ENCODE measurements at regions of chr5 and their contacts with region 1.

Region 1: DNA sequence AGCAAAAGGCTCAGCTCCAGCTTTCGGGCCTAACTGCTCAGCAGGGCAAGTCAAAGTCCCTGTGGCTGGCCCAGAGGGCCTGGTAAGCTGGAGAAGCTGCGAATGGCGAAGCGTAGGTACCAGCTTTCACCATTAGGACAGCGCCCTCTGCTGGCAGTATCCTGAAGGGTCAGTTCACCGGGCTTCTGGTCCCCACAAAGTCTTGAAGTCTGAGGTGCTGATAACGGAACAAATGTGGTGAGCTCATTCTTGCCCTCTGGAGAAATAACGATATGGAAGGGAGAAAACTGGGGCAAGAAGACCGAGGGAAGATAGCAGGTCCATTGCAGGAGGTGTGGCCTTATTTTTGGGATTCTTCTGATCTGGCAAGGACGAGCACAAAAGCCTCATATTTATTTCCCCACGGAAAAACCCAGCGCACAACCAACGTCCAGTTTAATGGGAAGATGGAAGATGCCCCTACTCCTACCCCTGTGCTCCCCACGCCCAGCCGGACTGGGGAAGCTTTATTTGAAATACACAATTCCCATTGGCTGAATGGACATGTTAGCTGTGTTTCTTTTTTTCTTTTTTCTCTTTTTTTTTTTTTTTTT is 7.2 kb downstream of the SOWAHA start:
- DNase-seq: peak; percentile 85
- H3K4me3 ChIP-seq: no peak overlapping the region
- H3K27ac ChIP-seq: peak overlapping the region; percentile 39
- H3K27me3 ChIP-seq: no peaks in the 10 kb centered on the region
- CTCF ChIP-seq: peak; percentile 95

Region 2: GRCh38 chr5:132526290-132526973 is 293.8 kb before region 1 on chr5:
- CTCF ChIA-PET with region 1: interaction called, 17 read pairs
- POLR2A ChIA-PET with region 1: no interaction called
- DNase-seq: no peak
- H3K4me3 ChIP-seq: peak overlapping the region; percentile 20; the same call in 1 of the 2 replicates
- H3K27ac ChIP-seq: no peak overlapping the region
- H3K27me3 ChIP-seq: peaks cover 10% of the 10 kb centered on the region
- CTCF ChIP-seq: peak; percentile 85

Region 3: GRCh38 chr5:132704875-132705274 is 115.4 kb before region 1 on chr5:
- CTCF ChIA-PET with region 1: interaction called, 11 read pairs
- POLR2A ChIA-PET with region 1: no interaction called
- DNase-seq: no peak
- H3K4me3 ChIP-seq: no peak overlapping the region
- H3K27ac ChIP-seq: no peak overlapping the region
- H3K27me3 ChIP-seq: no peaks in the 10 kb centered on the region
- CTCF ChIP-seq: no peak

Region 4: DNA sequence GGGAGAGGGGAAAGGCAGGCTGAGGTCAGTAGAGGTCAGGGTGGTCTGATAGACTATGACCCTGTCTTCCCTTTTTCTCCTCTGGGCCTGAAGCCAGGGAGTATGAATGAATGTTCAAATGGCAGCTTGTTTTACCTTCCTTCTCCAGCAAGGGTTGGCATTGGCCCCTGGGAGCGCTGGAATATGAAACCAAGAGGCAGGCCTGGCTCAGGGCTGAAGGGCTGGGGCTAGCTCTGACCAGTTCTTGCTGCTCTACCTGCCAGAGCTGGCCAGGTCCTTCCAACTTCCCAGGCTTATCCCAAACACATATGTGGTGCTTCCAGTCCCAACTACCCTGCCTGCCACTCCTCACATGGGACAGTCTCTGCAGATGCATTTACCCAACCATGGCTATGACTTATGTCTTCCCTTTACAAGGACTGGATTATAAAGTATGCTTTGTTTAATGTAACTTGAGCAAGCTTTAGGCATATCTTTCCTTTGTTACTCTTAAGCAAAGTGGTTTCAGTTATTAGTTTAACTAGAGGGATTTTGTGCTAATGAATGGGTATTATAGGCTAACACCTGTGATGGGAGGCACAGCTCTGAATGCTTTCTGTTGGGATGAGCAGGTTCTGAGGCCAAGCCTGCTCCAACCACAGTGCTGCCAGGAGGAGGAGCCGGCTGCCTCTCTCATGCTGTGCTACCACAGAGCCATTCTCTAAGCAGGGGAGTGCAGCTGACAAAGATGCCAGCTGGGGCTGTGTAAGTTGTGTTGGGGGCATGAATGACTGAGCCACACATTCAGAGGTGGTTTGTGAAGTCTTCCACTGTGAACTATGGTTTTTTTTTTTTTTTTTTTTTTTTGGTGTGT is 66.9 kb before region 1 on chr5:
- CTCF ChIA-PET with region 1: interaction called, 147 read pairs
- POLR2A ChIA-PET with region 1: interaction called, 7 read pairs
- DNase-seq: no peak
- H3K4me3 ChIP-seq: no peak overlapping the region
- H3K27ac ChIP-seq: no peak overlapping the region
- H3K27me3 ChIP-seq: peaks cover 14% of the 10 kb centered on the region
- CTCF ChIP-seq: 0 out of 2 replicates have a peak, but pooled peaks have one; percentile 6

Region 5: GRCh38 chr5:132807163-132807838 is 13.0 kb before region 1 on chr5:
- CTCF ChIA-PET with region 1: interaction called, 54 read pairs
- POLR2A ChIA-PET with region 1: no interaction called
- DNase-seq: no peak
- H3K4me3 ChIP-seq: no peak overlapping the region
- H3K27ac ChIP-seq: no peak overlapping the region
- H3K27me3 ChIP-seq: peaks cover 28% of the 10 kb centered on the region
- CTCF ChIP-seq: peak; percentile 27

Region 6: GRCh38 chr5:132859889-132860437 is 39.7 kb after region 1 on chr5:
- CTCF ChIA-PET with region 1: interaction called, 13 read pairs
- POLR2A ChIA-PET with region 1: no interaction called
- DNase-seq: no peak
- H3K4me3 ChIP-seq: no peak overlapping the region
- H3K27ac ChIP-seq: no peak overlapping the region
- H3K27me3 ChIP-seq: no peaks in the 10 kb centered on the region
- CTCF ChIP-seq: no peak

Region 7: GRCh38 chr5:133052333-133053175 is 232.3 kb after region 1 on chr5:
- CTCF ChIA-PET with region 1: no interaction called
- POLR2A ChIA-PET with region 1: no interaction called
- DNase-seq: no peak
- H3K4me3 ChIP-seq: peak overlapping the region; percentile 96
- H3K27ac ChIP-seq: peak overlapping the region; percentile 99
- H3K27me3 ChIP-seq: no peaks in the 10 kb centered on the region
- CTCF ChIP-seq: no peak

Region 8: GRCh38 chr5:133483406-133484090 is 663.3 kb after region 1 on chr5:
- CTCF ChIA-PET with region 1: no interaction called
- POLR2A ChIA-PET with region 1: no interaction called
- DNase-seq: no peak
- H3K4me3 ChIP-seq: no peak overlapping the region
- H3K27ac ChIP-seq: no peak overlapping the region
- H3K27me3 ChIP-seq: peaks cover 2% of the 10 kb centered on the region
- CTCF ChIP-seq: no peak